KBM-7 (cell line): ENCODE measurements at regions of chr20 and their contacts with region 1.

Region 1: GRCh38 chr20:21235484-21236445 is 67.4 kb upstream of the XRN2 start:
- DNase-seq: peak; percentile 81

Region 2: DNA sequence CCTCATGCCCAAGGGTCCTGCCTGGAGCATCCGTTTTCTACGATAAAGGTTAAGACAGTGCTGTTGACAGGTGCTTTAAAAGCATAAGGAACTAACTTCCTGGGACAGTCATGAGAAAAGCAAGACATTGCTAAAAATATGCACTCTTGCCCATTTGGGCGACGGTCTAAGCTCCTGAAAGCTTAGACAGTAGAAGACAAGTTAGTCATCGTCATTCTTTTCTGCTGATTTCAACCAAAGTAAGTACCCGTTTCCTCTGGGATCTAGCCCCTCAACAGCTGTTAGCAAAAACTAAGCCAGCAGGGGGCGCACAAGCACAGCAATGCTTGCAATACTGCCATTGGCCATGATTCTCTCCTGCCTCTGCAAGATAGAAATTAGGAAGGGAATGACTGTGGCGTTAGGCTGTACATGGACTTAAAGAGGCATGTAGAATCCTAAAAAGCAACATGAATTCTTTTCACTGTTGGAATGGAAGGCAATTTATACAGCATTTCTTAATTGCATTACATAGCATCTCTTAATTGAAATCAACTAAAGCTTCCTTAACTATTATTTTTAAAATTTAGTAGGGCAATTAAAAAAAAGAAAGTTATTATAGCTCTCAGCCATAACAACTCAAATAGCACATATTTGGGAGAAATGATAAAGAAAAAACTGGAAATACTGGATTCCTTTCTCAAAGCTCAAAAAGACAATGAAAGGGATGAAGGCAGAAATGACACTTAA is 375.5 kb before region 1 on chr20:
- in situ Hi-C with region 1: loop called (anchors 25 kb)
- DNase-seq: peak; percentile 87

Region 3: GRCh38 chr20:21505161-21505809 is 269.5 kb after region 1 on chr20:
- in situ Hi-C with region 1: loop called (anchors 10 kb)
- DNase-seq: peak; percentile 85

Region 4: GRCh38 chr20:21615617-21616080 is 379.9 kb after region 1 on chr20:
- in situ Hi-C with region 1: loop called (anchors 25 kb)
- DNase-seq: peak; percentile 69

Region 5: DNA sequence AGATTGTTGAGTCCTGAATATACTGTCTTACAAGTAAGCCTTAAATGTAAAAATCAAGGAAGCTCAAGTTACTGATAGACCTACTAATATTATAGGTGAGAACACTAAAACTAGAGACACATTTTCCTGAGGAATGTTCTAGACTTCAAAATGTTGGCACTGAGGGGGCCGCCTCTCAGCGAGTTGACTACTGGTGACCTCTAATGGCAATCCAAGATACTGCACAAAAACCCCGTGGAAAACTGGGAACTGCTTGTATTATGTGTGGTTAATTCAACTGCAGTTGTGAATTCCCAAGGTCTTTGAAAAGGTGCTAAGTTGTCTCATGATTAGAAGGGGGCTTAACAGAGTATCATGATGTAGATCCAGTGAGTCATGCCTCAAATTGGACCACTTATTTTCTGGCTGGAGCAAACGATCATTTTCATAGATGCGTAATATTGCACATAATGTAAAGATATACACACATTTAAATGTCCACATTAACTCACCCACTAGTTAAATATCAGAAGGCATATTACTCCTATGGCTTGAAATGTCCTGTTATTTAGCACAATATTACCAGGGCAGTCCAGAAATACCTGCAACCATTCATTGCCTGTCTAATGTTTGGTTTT is 1012.4 kb after region 1 on chr20:
- in situ Hi-C with region 1: no loop called
- DNase-seq: peak; percentile 26